ENCODE measurements at regions of chr4 and their contacts with region 1.

Region 1: GRCh38 chr4:102826890-102827673 is at the start of gene UBE2D3:
- DNase-seq: peak; percentile 73 to 94 (median 76)
- ATAC-seq: peak; percentile 62
- H3K4me3 ChIP-seq: peak within 1 kb of the TSS; percentile 97
- H3K27ac ChIP-seq: peak within 1 kb of the TSS; percentile 99
- H3K4me1 ChIP-seq: peaks cover 6 to 9% of the 10 kb centered on the region in 2 experiments
- H3K27me3 ChIP-seq: no peaks in the 10 kb centered on the region
- CTCF ChIP-seq: peak in 2 of 3 experiments; percentile 11 to 25; a peak in 1 of 6 replicates
- EP300 ChIP-seq: peak; percentile 39; the same call in 1 of the 2 replicates
- POLR2A ChIP-seq: peak; percentile 94
- RAD21 ChIP-seq: no peak; a peak in 1 of 4 replicates
- polyA plus RNA-seq, gene UBE2D3: 191 to 202 TPM

Region 2: GRCh38 chr4:102620697-102621497 is 206.2 kb before region 1 on chr4:
- CTCF ChIA-PET with region 1: no interaction called
- POLR2A ChIA-PET with region 1: interaction called, 4 read pairs
- in situ Hi-C with region 1: no loop called
- intact Hi-C with region 1: loop called (anchors 2 kb)
- DNase-seq: peak; percentile 52 to 81 (median 64)
- ATAC-seq: peak; percentile 95
- H3K4me3 ChIP-seq: no peak overlapping the region
- H3K27ac ChIP-seq: no peak overlapping the region
- H3K4me1 ChIP-seq: no peaks in the 10 kb centered on the region
- H3K27me3 ChIP-seq: no peaks in the 10 kb centered on the region
- CTCF ChIP-seq: peak; percentile 71 to 94 (median 88)
- EP300 ChIP-seq: peak; percentile 18; the same call in 1 of the 2 replicates
- POLR2A ChIP-seq: no peak
- RAD21 ChIP-seq: peak; percentile 94 to 95

Region 3: DNA sequence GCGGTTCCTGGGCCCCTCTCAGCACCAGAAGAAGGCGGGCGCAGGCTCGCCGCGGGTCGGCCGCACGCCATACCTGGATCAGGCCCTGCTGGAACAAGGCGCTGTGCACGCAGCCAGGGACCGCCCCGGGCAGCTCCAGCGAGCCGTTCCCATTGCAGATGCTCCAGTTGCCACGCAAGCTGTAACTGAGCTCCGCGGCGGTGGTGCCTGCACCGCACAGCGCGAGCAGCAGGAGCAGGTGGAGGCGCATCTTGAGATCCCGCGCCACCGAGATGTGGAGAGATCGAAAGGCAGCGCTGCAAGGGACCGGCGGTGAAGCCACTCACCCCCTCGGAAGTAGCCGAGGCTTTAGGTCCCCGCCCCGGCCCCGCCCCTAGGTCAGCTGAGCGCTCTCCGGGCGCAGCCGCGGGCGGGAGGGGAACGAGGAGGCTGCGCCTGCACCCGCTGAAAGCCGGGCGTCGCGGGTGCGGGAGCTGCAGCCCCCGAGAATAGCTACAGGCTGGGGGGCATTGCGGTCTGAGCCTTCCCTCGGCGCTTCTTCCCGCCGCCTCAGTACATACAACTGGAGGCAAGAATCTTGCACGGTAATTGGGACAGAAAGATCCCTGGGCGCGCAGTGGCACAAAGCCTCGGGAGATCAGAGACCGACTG is 66.3 kb before region 1 on chr4 and contains the start of gene MANBA:
- CTCF ChIA-PET with region 1: no interaction called
- POLR2A ChIA-PET with region 1: interaction called, 4 read pairs
- in situ Hi-C with region 1: no loop called
- intact Hi-C with region 1: loop called (anchors 5 kb)
- DNase-seq: peak; percentile 89 to 94 (median 91)
- ATAC-seq: peak; percentile 98
- H3K4me3 ChIP-seq: peak within 1 kb of the TSS; percentile 71
- H3K27ac ChIP-seq: peak within 1 kb of the TSS; percentile 60
- H3K4me1 ChIP-seq: peaks cover 4 to 10% of the 10 kb centered on the region in 2 experiments; a peak in 4 of 5 replicates
- H3K27me3 ChIP-seq: no peaks in the 10 kb centered on the region
- CTCF ChIP-seq: 0 out of 6 replicates have a peak, but pooled peaks of 1 of the 3 experiments have one; percentile 5
- EP300 ChIP-seq: no peak; the same call in 1 of the 2 replicates
- POLR2A ChIP-seq: peak; percentile 72
- RAD21 ChIP-seq: 0 out of 4 replicates have a peak, but pooled peaks of 1 of the 2 experiments have one; percentile 2
- polyA plus RNA-seq, gene MANBA: 1.8 to 3.7 TPM

Region 4: DNA sequence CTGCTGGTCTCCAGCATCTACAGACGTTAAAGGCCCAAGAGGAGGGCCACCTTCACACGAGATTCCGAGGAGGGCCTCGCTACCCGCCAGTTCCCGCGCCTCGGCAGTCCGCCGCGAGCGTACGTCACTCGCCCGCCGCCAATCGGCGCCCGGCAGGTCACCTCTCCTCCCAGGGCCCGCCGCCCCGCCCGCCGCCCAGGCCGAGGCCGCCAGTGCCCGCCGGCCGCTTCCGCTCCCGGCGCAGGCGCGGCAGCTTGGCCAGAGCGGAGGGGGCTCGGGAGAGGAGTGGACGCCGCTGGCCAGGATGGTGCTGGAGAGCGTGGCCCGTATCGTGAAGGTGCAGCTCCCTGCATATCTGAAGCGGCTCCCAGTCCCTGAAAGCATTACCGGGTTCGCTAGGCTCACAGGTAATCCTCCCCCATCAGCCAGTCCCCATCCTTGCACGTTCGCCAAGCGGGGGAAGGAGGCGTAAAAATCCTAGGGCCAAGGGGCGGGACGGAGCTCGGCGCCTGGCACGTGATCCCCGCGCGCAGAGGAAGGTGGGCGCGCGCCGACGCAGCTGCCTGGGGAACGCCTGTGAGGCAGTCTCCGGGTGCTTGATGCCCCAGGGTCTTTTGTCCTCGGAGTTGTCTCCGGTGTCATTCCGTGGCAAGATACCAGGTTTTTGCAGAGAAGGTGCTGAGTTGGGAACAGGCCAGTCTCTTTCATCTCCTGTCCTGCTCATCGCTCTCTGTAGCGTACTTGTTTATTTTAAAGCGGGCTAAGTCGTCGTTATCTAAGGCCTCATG is 41.9 kb after region 1 on chr4 and contains the start of gene CISD2:
- CTCF ChIA-PET with region 1: interaction called, 3 read pairs
- POLR2A ChIA-PET with region 1: interaction called, 48 read pairs
- in situ Hi-C with region 1: no loop called
- intact Hi-C with region 1: loop called (anchors 1 kb)
- DNase-seq: peak; percentile 85 to 95 (median 88)
- ATAC-seq: peak; percentile 83
- H3K4me3 ChIP-seq: peak within 1 kb of the TSS; percentile 59
- H3K27ac ChIP-seq: peak within 1 kb of the TSS; percentile 98
- H3K4me1 ChIP-seq: peaks cover 8 to 10% of the 10 kb centered on the region in 2 experiments
- H3K27me3 ChIP-seq: no peaks in the 10 kb centered on the region
- CTCF ChIP-seq: no peak; a peak in 2 of 6 replicates
- EP300 ChIP-seq: peak; percentile 27; the same call in 1 of the 2 replicates
- POLR2A ChIP-seq: peak; percentile 90
- RAD21 ChIP-seq: no peak
- polyA plus RNA-seq, gene CISD2: 87.2 to 91.4 TPM

Region 5: DNA sequence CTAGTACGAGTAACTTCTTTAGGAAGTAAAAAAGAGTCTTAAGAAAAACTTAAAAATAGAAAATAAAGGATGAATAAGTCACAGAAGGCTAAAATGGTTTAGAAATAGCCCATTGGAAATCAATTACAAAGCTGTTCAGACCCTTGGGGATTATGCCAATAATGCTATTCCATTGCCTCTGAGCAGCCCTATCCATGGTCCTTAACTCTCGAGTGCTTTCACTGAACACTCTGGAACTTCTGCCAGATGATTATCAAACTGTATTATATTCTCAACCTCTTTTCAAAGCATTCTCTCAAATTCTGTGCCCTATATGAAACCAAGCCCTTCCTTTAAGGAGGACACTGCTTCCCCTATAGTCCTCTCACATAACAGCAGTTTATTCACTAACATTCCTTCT is 175.5 kb after region 1 on chr4:
- CTCF ChIA-PET with region 1: no interaction called
- POLR2A ChIA-PET with region 1: no interaction called
- in situ Hi-C with region 1: no loop called
- intact Hi-C with region 1: no loop called
- DNase-seq: no peak
- ATAC-seq: no peak
- H3K4me3 ChIP-seq: no peak overlapping the region
- H3K27ac ChIP-seq: no peak overlapping the region
- H3K4me1 ChIP-seq: no peaks in the 10 kb centered on the region
- H3K27me3 ChIP-seq: no peaks in the 10 kb centered on the region
- CTCF ChIP-seq: no peak
- EP300 ChIP-seq: no peak
- POLR2A ChIP-seq: no peak
- RAD21 ChIP-seq: no peak

Region 6: GRCh38 chr4:103075901-103076739 is 249.0 kb after region 1 on chr4:
- CTCF ChIA-PET with region 1: no interaction called
- POLR2A ChIA-PET with region 1: no interaction called
- in situ Hi-C with region 1: no loop called
- intact Hi-C with region 1: loop called (anchors 5 kb)
- DNase-seq: peak; percentile 59 to 79 (median 68)
- ATAC-seq: peak; percentile 91
- H3K4me3 ChIP-seq: peak overlapping the region; percentile 54
- H3K27ac ChIP-seq: peak overlapping the region; percentile 80
- H3K4me1 ChIP-seq: peaks cover 10 to 13% of the 10 kb centered on the region in 2 experiments; a peak in 4 of 5 replicates
- H3K27me3 ChIP-seq: no peaks in the 10 kb centered on the region
- CTCF ChIP-seq: peak in 1 of 3 experiments; percentile 3; a peak in 1 of 6 replicates
- EP300 ChIP-seq: 0 out of 2 replicates have a peak, but pooled peaks have one; percentile 17
- POLR2A ChIP-seq: peak; percentile 82
- RAD21 ChIP-seq: no peak